Activated CD4-positive, alpha-beta memory T cell treated with anti-CD3 and anti-CD28 coated beads, Interleukin-2, amount 10 ng/mL, durations not matched to agents 7 days and 5 days (primary cell): ENCODE measurements at regions of chr19 and their contacts with region 1.

Region 1: DNA sequence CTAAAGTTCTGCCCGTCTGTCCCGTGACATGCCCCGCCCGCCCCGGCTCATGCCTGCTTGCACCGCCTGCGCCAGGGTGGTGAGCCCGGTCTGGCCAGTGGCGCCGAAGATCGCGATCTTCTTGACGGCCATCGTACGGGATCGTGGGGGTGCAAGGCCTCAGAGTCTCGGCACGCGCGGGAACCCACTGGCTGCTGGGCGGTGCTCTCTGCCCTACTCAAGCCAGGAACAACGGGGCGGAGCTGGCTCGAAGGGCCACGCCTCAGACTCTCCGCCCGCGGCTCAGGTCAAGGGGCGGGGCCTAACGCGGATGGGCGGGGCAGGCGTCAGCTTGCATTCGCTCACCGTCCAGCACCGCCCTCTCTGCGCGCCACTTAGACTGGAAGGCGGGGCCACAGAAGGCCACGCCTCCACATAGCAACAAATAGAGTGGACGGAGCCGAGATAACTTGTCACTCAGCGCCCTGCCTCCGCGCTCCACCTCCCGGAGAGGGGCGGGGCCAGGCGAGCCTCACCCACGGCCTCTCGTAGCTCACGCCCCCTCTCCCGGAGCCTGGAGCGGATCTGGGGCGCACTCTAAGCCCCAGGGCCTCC is at the start of gene BLVRB:
- DNase-seq: peak; percentile 100
- H3K4me3 Mint-ChIP-seq: peak within 1 kb of the TSS; percentile 87
- H3K27ac Mint-ChIP-seq: peak within 1 kb of the TSS; percentile 70
- H3K4me1 Mint-ChIP-seq: peaks cover 36% of the 10 kb centered on the region
- H3K27me3 Mint-ChIP-seq: peaks cover 23% of the 10 kb centered on the region
- total RNA-seq, gene BLVRB: 20.1 to 20.5 TPM

Region 2: DNA sequence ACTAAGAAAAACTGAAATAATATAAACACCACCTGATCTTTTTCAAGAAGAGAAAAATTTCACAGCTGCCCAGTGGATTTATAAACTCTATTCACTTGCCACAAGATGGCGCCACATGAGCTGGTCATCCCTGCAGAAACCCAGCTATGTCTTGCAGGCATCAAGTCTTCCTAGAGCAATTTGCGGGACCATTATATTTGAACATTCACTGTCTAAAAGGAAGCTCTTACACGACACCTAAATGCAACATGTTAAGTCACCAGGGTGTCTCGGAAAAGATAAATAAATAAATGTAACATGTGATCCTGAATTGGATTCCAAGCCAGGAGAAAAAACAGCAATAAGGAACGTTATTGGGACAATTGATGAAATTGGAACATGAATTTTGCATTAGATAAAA is 160.3 kb before region 1 on chr19:
- CTCF ChIA-PET with region 1: interaction called, 11 read pairs
- POLR2A ChIA-PET with region 1: no interaction called
- DNase-seq: peak; percentile 83
- H3K4me3 Mint-ChIP-seq: no peak overlapping the region
- H3K27ac Mint-ChIP-seq: no peak overlapping the region
- H3K4me1 Mint-ChIP-seq: peaks cover 3% of the 10 kb centered on the region
- H3K27me3 Mint-ChIP-seq: no peaks in the 10 kb centered on the region

Region 3: GRCh38 chr19:40433391-40434216 is 32.0 kb before region 1 on chr19:
- CTCF ChIA-PET with region 1: interaction called, 10 read pairs
- POLR2A ChIA-PET with region 1: interaction called, 4 read pairs
- DNase-seq: peak; percentile 73
- H3K4me3 Mint-ChIP-seq: peak overlapping the region; percentile 85
- H3K27ac Mint-ChIP-seq: peak overlapping the region; percentile 89
- H3K4me1 Mint-ChIP-seq: peaks cover 14% of the 10 kb centered on the region
- H3K27me3 Mint-ChIP-seq: no peaks in the 10 kb centered on the region

Region 4: DNA sequence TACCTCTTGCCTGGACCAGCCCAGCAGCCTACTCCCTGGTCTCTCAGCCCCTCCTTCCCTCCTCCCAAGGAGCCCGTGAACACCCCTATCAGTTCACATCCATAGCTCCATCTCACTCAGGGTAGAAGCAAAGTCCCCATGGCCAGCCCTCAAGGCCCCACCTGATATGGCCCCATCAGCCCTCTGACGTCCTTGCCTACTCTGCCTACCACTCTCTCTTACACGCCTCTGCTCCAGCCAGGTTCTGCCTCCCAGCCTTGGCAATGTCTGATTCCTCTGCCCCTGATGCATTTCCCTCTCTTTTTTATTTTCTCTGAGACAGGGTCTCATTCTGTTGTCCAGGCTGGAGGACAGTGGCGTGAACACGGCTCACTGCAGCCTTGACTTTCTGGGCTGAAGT is 13.6 kb before region 1 on chr19:
- CTCF ChIA-PET with region 1: interaction called, 16 read pairs
- POLR2A ChIA-PET with region 1: no interaction called
- DNase-seq: no peak
- H3K4me3 Mint-ChIP-seq: no peak overlapping the region
- H3K27ac Mint-ChIP-seq: no peak overlapping the region
- H3K4me1 Mint-ChIP-seq: no peaks in the 10 kb centered on the region
- H3K27me3 Mint-ChIP-seq: no peaks in the 10 kb centered on the region

Region 5: GRCh38 chr19:40640744-40641143 is 175.1 kb after region 1 on chr19:
- CTCF ChIA-PET with region 1: interaction called, 10 read pairs
- POLR2A ChIA-PET with region 1: no interaction called
- DNase-seq: no peak
- H3K4me3 Mint-ChIP-seq: no peak overlapping the region
- H3K27ac Mint-ChIP-seq: no peak overlapping the region
- H3K4me1 Mint-ChIP-seq: peaks cover 1% of the 10 kb centered on the region
- H3K27me3 Mint-ChIP-seq: peaks cover 1% of the 10 kb centered on the region